HepG2 (cell line): ENCODE measurements at regions of chr17 and their contacts with region 1.

Region 1: GRCh38 chr17:43673516-43674323 is 12.0 kb upstream of the MEOX1 start:
- DNase-seq: peak; percentile 67
- ATAC-seq: peak; percentile 55
- H3K4me3 ChIP-seq: no peak overlapping the region
- H3K27ac ChIP-seq: no peak overlapping the region
- H3K4me1 ChIP-seq: peaks cover 100% of the 10 kb centered on the region
- H3K27me3 ChIP-seq: no peaks in the 10 kb centered on the region
- CTCF ChIP-seq: peak; percentile 94
- EP300 ChIP-seq: no peak
- POLR2A ChIP-seq: no peak
- RAD21 ChIP-seq: peak; percentile 97

Region 2: GRCh38 chr17:43517615-43518386 is 155.9 kb before region 1 on chr17:
- CTCF ChIA-PET with region 1: interaction called, 18 read pairs
- POLR2A ChIA-PET with region 1: no interaction called
- in situ Hi-C with region 1: no loop called
- intact Hi-C with region 1: loop called (anchors 1 kb)
- DNase-seq: no peak
- ATAC-seq: no peak
- H3K4me3 ChIP-seq: no peak overlapping the region
- H3K27ac ChIP-seq: no peak overlapping the region
- H3K4me1 ChIP-seq: peaks cover 27% of the 10 kb centered on the region
- H3K27me3 ChIP-seq: no peaks in the 10 kb centered on the region
- CTCF ChIP-seq: no peak
- EP300 ChIP-seq: no peak
- POLR2A ChIP-seq: no peak
- RAD21 ChIP-seq: no peak

Region 3: DNA sequence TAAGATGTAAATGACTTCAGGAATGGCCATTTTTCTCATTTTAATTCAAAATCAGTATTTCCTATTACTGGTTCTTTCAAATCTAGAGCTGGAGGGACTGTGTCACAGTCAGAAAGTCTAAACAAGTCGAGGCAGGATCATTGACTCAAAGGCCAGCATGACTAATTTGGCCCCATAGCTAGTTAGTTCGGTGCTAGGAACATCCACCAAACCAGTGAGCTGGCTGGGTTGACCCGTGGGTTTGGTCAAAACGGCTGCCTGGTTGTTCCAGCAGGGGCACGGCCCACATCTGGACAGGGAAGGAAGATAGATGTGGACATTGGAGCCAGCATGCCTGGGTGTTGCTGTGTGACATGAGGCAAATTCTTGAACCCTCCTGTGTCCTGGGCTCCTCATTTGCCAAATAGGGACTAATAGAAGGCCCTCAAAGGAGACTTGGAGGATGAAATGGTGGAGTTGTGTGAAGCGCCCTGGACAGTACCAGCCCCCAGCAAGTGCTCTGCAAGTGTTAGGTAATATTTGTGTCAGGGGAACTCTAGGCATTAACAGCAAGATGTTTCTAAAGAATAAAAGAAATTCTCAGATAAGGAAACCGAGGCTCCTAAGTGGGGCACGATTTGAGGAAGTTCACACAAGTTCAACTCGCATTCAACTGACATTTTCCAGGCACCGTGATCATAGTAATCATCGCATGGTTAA is 58.2 kb before region 1 on chr17:
- CTCF ChIA-PET with region 1: no interaction called
- POLR2A ChIA-PET with region 1: no interaction called
- in situ Hi-C with region 1: no loop called
- intact Hi-C with region 1: loop called (anchors 5 kb)
- DNase-seq: no peak
- ATAC-seq: no peak
- H3K4me3 ChIP-seq: no peak overlapping the region
- H3K27ac ChIP-seq: no peak overlapping the region
- H3K4me1 ChIP-seq: peaks cover 44% of the 10 kb centered on the region
- H3K27me3 ChIP-seq: peaks cover 0 to 8% of the 10 kb centered on the region in 2 experiments; a peak in 1 of 5 replicates
- CTCF ChIP-seq: no peak
- EP300 ChIP-seq: no peak
- POLR2A ChIP-seq: no peak
- RAD21 ChIP-seq: no peak